Activated CD4-positive, alpha-beta T cell treated with anti-CD3 and anti-CD28 coated beads, Interleukin-2, amount 10 ng/mL, durations not matched to agents 7 days and 5 days (primary cell): ENCODE measurements at regions of chr12 and their contacts with region 1.

Region 1: GRCh38 chr12:69254046-69254445 is 14.7 kb downstream of the CPSF6 start:
- DNase-seq: peak; percentile 40
- H3K4me3 Mint-ChIP-seq: no peak overlapping the region
- H3K27ac Mint-ChIP-seq: peak overlapping the region; percentile 42
- H3K4me1 Mint-ChIP-seq: peaks cover 31% of the 10 kb centered on the region
- H3K27me3 Mint-ChIP-seq: no peaks in the 10 kb centered on the region

Region 2: DNA sequence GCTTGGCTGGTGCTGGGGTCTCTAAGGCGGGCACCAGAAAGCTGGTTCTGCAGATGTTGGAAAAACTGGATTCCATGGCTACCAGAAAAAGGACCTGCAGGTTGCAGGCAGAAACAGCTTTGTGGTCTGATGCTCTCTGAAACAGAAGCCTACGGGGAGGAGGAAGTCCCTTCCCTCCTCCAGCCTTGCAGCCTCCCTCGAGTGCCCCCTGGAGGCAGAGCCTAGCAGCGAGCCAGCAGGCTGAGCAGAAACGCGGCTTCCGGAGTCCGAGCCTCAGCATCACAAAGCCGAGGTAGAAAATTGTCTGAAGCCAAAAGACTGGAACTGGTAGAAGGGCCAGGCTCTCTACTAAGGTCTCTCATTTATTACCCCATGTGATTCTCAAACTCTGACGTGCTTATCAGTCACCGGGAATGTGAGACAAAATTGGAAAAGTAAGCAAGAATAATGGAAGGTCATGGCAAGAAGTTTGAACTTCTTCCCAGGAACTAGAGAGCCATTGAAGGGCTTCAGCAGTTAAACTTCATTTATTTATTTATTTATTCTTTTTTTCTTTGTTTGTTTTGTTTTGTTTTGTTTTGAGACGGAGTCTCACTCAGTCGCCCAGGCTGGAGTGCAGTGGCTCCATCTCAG is 96.9 kb before region 1 on chr12:
- CTCF ChIA-PET with region 1: interaction called, 13 read pairs
- POLR2A ChIA-PET with region 1: no interaction called
- DNase-seq: peak; percentile 92
- H3K4me3 Mint-ChIP-seq: peak overlapping the region; percentile 23
- H3K27ac Mint-ChIP-seq: peak overlapping the region; percentile 70
- H3K4me1 Mint-ChIP-seq: peaks cover 52% of the 10 kb centered on the region
- H3K27me3 Mint-ChIP-seq: no peaks in the 10 kb centered on the region

Region 3: GRCh38 chr12:69243099-69244084 is 10.7 kb before region 1 on chr12:
- CTCF ChIA-PET with region 1: interaction called, 14 read pairs
- POLR2A ChIA-PET with region 1: no interaction called
- DNase-seq: peak; percentile 27
- H3K4me3 Mint-ChIP-seq: peak overlapping the region; percentile 52
- H3K27ac Mint-ChIP-seq: peak overlapping the region; percentile 37
- H3K4me1 Mint-ChIP-seq: peaks cover 69% of the 10 kb centered on the region
- H3K27me3 Mint-ChIP-seq: no peaks in the 10 kb centered on the region

Region 4: GRCh38 chr12:69265205-69265604 is 11.2 kb after region 1 on chr12:
- CTCF ChIA-PET with region 1: interaction called, 11 read pairs
- POLR2A ChIA-PET with region 1: no interaction called
- DNase-seq: no peak
- H3K4me3 Mint-ChIP-seq: no peak overlapping the region
- H3K27ac Mint-ChIP-seq: no peak overlapping the region
- H3K4me1 Mint-ChIP-seq: peaks cover 3% of the 10 kb centered on the region
- H3K27me3 Mint-ChIP-seq: no peaks in the 10 kb centered on the region